ENCODE measurements at regions of chr7 and their contacts with region 1.

Region 1: GRCh38 chr7:27677912-27678612 is 15.4 kb upstream of the HIBADH start:
- DNase-seq: peak; percentile 85
- ATAC-seq: peak; percentile 90
- H3K4me3 ChIP-seq: no peak overlapping the region
- H3K27ac ChIP-seq: no peak overlapping the region
- H3K4me1 ChIP-seq: no peaks in the 10 kb centered on the region
- H3K27me3 ChIP-seq: no peaks in the 10 kb centered on the region
- CTCF ChIP-seq: no peak

Region 2: GRCh38 chr7:27586825-27587224 is 91.2 kb before region 1 on chr7:
- CTCF ChIA-PET with region 1: no interaction called
- POLR2A ChIA-PET with region 1: no interaction called
- in situ Hi-C with region 1: no loop called
- intact Hi-C with region 1: no loop called
- DNase-seq: no peak
- ATAC-seq: peak; percentile 62
- H3K4me3 ChIP-seq: no peak overlapping the region
- H3K27ac ChIP-seq: no peak overlapping the region
- H3K4me1 ChIP-seq: no peaks in the 10 kb centered on the region
- H3K27me3 ChIP-seq: no peaks in the 10 kb centered on the region
- CTCF ChIP-seq: no peak

Region 3: DNA sequence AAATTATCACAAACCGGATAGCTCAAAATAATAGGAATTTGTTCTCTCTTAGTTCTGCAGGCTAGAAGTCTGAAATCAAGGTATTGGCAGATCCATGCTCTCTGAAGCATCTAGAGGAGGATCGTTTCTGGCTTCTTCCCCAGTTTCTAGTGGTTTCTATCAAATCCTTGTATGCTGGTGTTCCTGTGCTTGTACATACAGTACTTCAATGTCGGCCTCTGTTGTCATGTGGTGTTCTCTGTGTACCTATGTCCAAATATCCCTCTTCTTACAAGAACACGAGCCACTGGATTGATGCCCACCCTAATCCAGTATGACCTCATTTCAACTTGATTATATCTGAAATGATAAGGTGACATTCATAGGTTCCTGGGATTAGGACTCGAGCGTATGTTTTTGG is 52.0 kb after region 1 on chr7:
- CTCF ChIA-PET with region 1: no interaction called
- POLR2A ChIA-PET with region 1: no interaction called
- in situ Hi-C with region 1: no loop called
- intact Hi-C with region 1: loop called (anchors 5 kb)
- DNase-seq: no peak
- ATAC-seq: no peak
- H3K4me3 ChIP-seq: no peak overlapping the region
- H3K27ac ChIP-seq: no peak overlapping the region
- H3K4me1 ChIP-seq: peaks cover 6% of the 10 kb centered on the region; the same call in 1 of the 2 replicates
- H3K27me3 ChIP-seq: no peaks in the 10 kb centered on the region
- CTCF ChIP-seq: no peak